Activated CD4-positive, alpha-beta memory T cell treated with anti-CD3 and anti-CD28 coated beads, Interleukin-2, amount 10 ng/mL, durations not matched to agents 7 days and 5 days (primary cell): ENCODE measurements at regions of chr20 and their contacts with region 1.

Region 1: DNA sequence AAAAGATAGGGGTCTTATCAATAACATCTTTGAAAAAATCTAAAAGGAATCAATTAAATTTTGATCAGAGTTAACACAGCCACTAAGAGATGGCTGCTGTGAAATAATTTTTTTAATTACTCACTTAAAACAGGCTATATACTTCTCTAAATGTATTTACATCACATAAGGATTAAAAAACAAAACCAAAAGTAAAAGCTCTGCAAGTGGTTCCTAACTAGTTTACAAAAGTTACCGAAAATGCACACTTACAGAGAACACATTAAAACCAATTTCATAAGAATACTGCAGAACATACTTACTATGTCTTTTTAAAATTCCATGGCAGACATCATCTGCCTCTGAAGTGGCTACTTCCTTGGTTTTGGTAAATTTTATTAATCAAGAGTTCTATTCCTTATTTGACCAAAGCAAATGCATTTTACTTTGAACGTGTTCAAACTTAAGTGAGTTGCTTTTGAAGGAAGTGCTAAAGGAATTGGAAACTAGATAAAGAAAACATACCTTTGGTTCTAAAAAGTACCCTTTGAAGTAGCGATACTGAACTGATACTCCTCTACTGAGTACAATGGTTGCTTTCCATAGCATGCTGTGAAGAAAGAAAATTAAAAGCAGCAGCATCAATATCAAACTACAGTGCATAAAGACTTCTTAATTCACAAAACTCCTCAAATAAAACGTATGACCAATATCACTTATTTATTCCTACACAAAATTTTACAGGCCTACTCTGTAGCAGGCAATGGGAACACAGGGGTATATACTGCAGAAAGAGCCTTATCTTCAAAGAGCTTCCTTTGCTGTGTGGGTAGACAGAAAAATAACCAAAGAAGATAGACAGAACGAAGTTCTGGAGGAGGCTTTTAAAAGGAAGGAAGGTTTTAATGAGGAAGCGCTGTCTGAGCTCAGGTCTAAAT is 157.1 kb upstream of the SHLD1 start:
- DNase-seq: no peak
- H3K4me3 Mint-ChIP-seq: peak overlapping the region; percentile 60
- H3K27ac Mint-ChIP-seq: peak overlapping the region; percentile 89
- H3K4me1 Mint-ChIP-seq: peaks cover 62% of the 10 kb centered on the region
- H3K27me3 Mint-ChIP-seq: no peaks in the 10 kb centered on the region

Region 2: DNA sequence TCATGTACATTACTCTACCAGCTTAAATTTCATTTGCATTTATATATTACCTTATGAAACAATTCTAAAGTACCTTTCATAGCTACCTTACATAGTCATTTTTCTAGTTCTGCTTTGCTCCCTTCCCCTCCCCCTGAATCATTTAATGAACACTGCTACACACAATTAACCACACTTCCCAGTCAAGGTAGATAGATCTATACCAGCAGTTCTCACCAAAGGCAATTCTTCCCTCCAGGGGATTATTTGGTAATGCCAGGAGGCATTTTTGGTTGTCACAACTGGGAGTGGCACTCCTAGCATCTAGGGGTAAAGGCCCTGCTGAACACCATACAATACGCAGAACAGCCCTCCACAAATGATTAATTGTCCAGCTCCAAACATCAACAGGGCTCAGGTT is 13.3 kb after region 1 on chr20:
- CTCF ChIA-PET with region 1: interaction called, 5 read pairs
- POLR2A ChIA-PET with region 1: interaction called, 23 read pairs
- DNase-seq: no peak
- H3K4me3 Mint-ChIP-seq: no peak overlapping the region
- H3K27ac Mint-ChIP-seq: peak overlapping the region; percentile 0
- H3K4me1 Mint-ChIP-seq: peaks cover 67% of the 10 kb centered on the region
- H3K27me3 Mint-ChIP-seq: no peaks in the 10 kb centered on the region